ENCODE measurements at regions of chr6 and their contacts with region 1.

Region 1: DNA sequence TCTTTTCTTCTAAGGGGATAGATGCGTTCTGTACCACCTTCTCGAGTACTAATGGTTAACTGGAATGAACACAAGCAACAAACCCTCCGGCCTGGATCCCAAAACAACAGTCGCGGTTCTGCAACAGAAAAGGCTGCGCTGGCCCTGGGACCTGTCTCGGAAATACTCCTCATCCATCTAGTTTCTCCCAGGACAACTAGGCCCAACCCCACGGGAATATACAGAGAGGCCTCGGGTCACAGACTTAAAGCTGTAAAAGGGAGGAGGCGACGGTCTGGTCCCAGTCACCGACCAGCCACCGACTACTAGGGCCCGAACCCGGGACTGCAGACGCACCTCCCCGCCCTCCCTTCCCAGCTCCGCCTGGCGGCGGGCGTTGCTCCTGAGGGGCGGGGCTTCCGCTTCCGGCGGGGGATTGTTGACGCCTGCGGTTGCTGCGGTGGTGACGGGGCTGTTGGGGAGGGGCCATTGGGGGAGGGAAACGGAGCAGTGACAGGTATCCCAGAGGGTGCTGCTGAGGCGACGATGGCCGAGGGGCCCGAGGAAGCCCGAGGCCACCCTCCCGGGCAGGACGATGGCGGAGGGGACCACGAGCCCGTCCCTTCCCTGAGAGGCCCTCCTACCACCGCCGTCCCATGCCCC is at the start of gene FAM8A1:
- DNase-seq: peak; percentile 91 to 97
- ATAC-seq: peak; percentile 86 to 93 (median 88)
- H3K4me3 ChIP-seq: peak within 1 kb of the TSS; percentile 76
- H3K4me3 Mint-ChIP-seq: peak within 1 kb of the TSS; percentile 97
- H3K27ac ChIP-seq: peak within 1 kb of the TSS; percentile 73
- H3K27ac Mint-ChIP-seq: peak within 1 kb of the TSS; percentile 96 to 98
- H3K4me1 ChIP-seq: peaks cover 16% of the 10 kb centered on the region
- H3K4me1 Mint-ChIP-seq: peaks cover 45 to 46% of the 10 kb centered on the region in 2 donors
- H3K27me3 ChIP-seq: no peaks in the 10 kb centered on the region
- H3K27me3 Mint-ChIP-seq: no peaks in the 10 kb centered on the region
- CTCF ChIP-seq: peak; percentile 34
- total RNA-seq, gene FAM8A1: 32.1 to 45.4 (median 35.5) TPM

Region 2: DNA sequence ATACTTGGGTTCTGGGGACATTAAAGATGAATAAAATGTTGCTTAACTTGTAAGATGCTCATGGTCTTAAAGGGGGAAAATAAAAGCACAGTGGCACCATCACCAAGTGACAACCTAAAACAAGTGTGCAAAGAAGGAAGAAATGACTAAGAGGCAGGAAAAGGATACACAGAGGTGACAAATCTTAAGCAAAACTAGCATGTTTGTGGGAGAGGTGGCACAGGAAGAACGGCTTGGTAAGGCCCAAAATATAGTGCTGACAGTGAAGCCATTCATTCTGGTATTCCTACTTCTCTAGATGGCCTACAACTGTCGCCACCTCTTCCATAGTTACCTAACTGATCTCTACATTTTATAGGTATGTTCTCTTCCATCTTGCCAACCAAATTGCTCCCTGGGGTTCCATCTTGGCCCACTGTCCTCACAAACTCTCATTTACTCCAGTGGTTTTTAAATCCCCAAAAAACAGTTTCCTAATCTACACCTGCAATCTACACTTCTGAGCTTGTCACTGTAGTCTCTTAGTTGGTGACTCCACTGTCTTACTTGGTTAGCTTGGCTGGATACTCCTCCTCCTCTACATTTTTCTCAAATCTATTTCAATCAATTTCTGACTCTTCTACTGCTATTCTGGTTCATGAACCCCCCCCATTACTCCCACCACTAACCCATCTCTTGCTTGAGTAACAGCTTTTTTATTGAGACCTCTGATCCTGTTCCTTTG is 33.6 kb after region 1 on chr6:
- intact Hi-C with region 1: loop called (anchors 2 kb)
- DNase-seq: peak; percentile 24 to 63
- ATAC-seq: peak; percentile 86 to 91 (median 88)
- H3K4me3 ChIP-seq: no peak overlapping the region
- H3K4me3 Mint-ChIP-seq: peak overlapping the region; percentile 72
- H3K27ac ChIP-seq: peak overlapping the region; percentile 58
- H3K27ac Mint-ChIP-seq: peak overlapping the region; percentile 74 to 86
- H3K4me1 ChIP-seq: peaks cover 31% of the 10 kb centered on the region
- H3K4me1 Mint-ChIP-seq: peaks cover 56 to 57% of the 10 kb centered on the region in 2 donors
- H3K27me3 ChIP-seq: no peaks in the 10 kb centered on the region
- H3K27me3 Mint-ChIP-seq: no peaks in the 10 kb centered on the region
- CTCF ChIP-seq: no peak

Region 3: DNA sequence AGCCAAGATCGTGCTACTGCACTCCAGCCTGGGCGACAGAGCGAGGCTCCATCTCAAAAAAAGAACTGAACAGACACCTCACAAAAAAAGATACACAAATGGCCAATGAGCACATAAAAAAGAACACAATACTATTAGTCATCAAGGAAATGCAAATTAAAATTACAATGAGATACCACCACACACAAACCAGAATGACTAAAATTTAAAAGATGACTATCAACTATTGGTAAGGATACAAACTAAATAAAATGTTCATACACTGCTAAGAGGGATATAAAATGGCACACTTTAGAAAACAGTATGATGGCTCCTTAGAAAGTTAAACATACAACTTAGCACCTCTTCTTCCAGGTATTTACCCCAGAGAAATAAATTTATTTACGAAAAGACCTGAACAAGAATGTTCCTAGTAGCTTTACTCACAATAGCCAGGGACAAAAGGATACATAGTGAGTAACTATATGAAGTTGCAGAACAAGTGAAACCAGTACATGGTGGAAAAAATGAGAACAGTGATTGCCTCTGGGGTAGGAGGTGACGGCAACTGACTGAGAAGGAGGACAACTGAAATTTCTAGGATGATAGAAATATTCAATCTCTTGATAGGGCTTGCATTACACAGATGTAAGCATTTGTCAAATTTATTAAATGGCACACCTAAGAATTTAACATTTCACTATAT is 53.3 kb after region 1 on chr6:
- intact Hi-C with region 1: no loop called
- DNase-seq: no peak
- ATAC-seq: no peak
- H3K4me3 ChIP-seq: no peak overlapping the region
- H3K4me3 Mint-ChIP-seq: no peak overlapping the region
- H3K27ac ChIP-seq: no peak overlapping the region
- H3K27ac Mint-ChIP-seq: peak overlapping the region in 1 of 2 donors; percentile 36
- H3K4me1 ChIP-seq: peaks cover 10% of the 10 kb centered on the region
- H3K4me1 Mint-ChIP-seq: peaks cover 38 to 51% of the 10 kb centered on the region in 2 donors
- H3K27me3 ChIP-seq: no peaks in the 10 kb centered on the region
- H3K27me3 Mint-ChIP-seq: no peaks in the 10 kb centered on the region
- CTCF ChIP-seq: no peak

Region 4: DNA sequence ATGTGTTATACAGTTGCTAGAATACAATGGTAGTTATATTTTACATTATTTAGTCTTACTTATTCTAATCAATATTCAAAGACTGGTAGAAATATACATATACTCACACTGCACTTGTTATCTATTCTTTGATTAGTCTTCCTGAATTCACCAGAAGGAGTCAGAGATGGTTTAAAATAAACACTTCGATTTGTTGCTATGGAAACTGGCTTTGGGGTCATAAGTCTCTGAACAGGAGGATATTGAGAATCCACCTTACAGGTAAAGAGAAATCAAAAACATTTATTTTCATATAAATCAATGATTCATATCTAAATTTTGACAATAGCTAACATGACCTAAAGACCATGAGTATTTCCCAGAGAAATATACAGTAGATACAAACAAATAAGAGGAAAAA is 65.1 kb after region 1 on chr6:
- intact Hi-C with region 1: loop called (anchors 5 kb)
- DNase-seq: peak in 1 of 2 donors; percentile 44
- ATAC-seq: no peak
- H3K4me3 ChIP-seq: no peak overlapping the region
- H3K4me3 Mint-ChIP-seq: peak overlapping the region; percentile 63
- H3K27ac ChIP-seq: peak overlapping the region; percentile 81
- H3K27ac Mint-ChIP-seq: peak overlapping the region; percentile 76 to 93
- H3K4me1 ChIP-seq: peaks cover 16% of the 10 kb centered on the region
- H3K4me1 Mint-ChIP-seq: peaks cover 36 to 46% of the 10 kb centered on the region in 2 donors
- H3K27me3 ChIP-seq: no peaks in the 10 kb centered on the region
- H3K27me3 Mint-ChIP-seq: no peaks in the 10 kb centered on the region
- CTCF ChIP-seq: no peak

Region 5: GRCh38 chr6:18122124-18123093 is 522.4 kb after region 1 on chr6 and contains the start of gene NHLRC1:
- intact Hi-C with region 1: loop called (anchors 10 kb)
- DNase-seq: peak; percentile 81 to 84
- ATAC-seq: peak; percentile 99 to 100 (median 99)
- H3K4me3 ChIP-seq: peak within 1 kb of the TSS; percentile 38
- H3K4me3 Mint-ChIP-seq: peak within 1 kb of the TSS; percentile 91
- H3K27ac ChIP-seq: no peak within 1 kb of the TSS
- H3K27ac Mint-ChIP-seq: peak within 1 kb of the TSS; percentile 43 to 90
- H3K4me1 ChIP-seq: peaks cover 13% of the 10 kb centered on the region
- H3K4me1 Mint-ChIP-seq: peaks cover 8 to 13% of the 10 kb centered on the region in 2 donors
- H3K27me3 ChIP-seq: no peaks in the 10 kb centered on the region
- H3K27me3 Mint-ChIP-seq: no peaks in the 10 kb centered on the region
- CTCF ChIP-seq: peak; percentile 81
- total RNA-seq, gene NHLRC1: 0.58 to 0.89 (median 0.68) TPM

Region 6: DNA sequence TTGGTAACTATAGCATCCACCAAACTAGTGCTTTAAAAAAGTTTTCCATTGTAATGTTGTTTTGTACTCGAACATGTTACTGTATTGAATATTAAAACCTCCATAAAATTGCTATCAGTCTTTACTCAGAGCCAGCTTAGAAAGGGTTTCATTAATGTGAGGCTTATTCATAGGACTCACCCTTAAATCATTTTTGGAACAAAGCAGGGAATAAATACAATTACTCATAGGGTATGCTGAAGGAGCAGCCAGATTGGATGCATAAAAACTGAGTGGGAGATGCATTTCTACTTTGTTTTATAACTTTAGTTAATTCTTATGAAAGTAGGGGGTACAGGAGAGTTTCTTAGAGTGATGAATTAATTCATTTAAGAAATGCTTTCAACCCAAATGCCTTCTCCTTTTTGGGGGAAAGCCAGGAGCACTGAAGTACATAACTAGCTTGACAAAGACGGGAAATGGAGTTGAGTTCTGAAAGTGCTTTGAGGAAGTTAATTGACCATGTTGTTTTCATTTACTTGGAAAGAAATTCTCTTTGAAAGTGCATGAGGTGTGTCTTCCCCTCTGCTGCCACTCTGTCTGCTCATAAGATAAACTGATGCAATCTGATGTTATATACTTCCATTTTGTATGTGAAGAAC is 877.4 kb after region 1 on chr6:
- intact Hi-C with region 1: no loop called
- DNase-seq: no peak
- ATAC-seq: no peak
- H3K4me3 ChIP-seq: no peak overlapping the region
- H3K4me3 Mint-ChIP-seq: no peak overlapping the region
- H3K27ac ChIP-seq: no peak overlapping the region
- H3K27ac Mint-ChIP-seq: no peak overlapping the region
- H3K4me1 ChIP-seq: no peaks in the 10 kb centered on the region
- H3K4me1 Mint-ChIP-seq: no peaks in the 10 kb centered on the region
- H3K27me3 ChIP-seq: no peaks in the 10 kb centered on the region
- H3K27me3 Mint-ChIP-seq: peaks cover 9 to 14% of the 10 kb centered on the region in 2 donors
- CTCF ChIP-seq: no peak

Measured in natural killer cell (primary cell).